Heart right ventricle (tissue), 16 donors: ENCODE measurements at regions of chr1 and their contacts with region 1.

Region 1: DNA sequence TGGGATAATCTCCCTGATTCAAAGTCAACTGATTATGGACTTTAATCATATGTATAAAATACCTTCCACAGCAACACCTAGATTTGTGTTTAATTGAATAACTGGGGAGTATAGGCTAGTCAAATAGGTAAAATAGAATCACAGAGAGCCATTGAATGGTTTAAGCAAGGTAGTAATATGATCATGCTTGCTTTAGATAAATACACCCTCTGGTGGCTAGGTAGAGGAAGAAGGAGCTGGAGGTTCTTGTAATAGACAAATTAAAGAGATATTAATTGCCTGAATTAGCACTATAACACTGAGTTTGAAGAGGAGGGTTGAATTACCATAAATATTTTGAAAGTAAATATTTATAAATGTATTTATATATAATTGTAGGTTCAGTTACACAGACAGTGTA is 40.3 kb downstream of the DIRAS3 start:
- DNase-seq: no peak
- ATAC-seq: peak in 2 of 8 donors; percentile 58 to 64
- H3K4me3 ChIP-seq: no peak overlapping the region
- H3K27ac ChIP-seq: no peak overlapping the region
- H3K4me1 ChIP-seq: no peaks in the 10 kb centered on the region
- H3K27me3 ChIP-seq: no peaks in the 10 kb centered on the region
- CTCF ChIP-seq: peak in 8 of 9 donors; percentile 29 to 62 (median 46)

Region 2: DNA sequence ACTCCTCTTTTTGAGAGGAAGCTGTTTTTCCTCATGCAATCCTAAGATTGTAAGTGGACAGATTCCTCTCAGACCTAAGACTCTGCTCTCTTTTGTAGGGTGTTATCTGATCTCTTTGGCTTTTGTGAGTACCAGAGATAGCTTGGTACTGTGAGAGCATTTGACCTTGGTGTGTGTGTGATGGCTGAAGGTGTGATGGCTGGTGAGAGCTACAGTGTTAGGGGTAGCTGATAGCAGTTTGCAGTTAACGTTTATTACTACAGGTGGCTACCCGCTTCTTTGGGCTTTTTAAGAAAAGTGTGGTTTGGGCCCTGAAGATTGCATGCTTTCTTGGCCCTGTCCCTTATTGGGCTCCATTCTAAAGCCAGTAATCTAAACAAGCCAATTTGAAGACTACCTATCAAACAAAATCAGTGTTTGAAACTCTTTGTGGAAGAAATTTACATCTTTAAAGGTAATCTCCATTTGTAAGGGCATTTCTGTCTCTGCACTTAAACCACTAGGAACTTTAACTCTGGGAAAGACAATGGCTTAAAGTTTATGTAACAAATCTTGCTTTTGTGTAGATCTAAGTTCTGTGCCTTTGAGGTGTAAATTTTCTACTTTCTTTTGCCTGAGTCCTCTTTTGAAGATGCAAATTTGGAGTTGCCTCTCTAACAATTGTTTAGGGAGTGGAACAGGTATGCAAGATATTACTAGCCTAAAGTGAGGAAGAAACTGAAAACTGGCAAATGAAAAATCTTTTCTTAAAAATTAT is 494.6 kb before region 1 on chr1:
- intact Hi-C with region 1: loop called in 1 of 10 experiments (anchors 10 kb)
- DNase-seq: no peak
- ATAC-seq: no peak
- H3K4me3 ChIP-seq: no peak overlapping the region
- H3K27ac ChIP-seq: no peak overlapping the region
- H3K4me1 ChIP-seq: no peaks in the 10 kb centered on the region
- H3K27me3 ChIP-seq: no peaks in the 10 kb centered on the region
- CTCF ChIP-seq: no peak